ENCODE measurements at regions of chr12 and their contacts with region 1.

Region 1: GRCh38 chr12:110247333-110248104 is 33.5 kb upstream of the ATP2A2 start:
- DNase-seq: no peak
- ATAC-seq: peak; percentile 54

Region 2: DNA sequence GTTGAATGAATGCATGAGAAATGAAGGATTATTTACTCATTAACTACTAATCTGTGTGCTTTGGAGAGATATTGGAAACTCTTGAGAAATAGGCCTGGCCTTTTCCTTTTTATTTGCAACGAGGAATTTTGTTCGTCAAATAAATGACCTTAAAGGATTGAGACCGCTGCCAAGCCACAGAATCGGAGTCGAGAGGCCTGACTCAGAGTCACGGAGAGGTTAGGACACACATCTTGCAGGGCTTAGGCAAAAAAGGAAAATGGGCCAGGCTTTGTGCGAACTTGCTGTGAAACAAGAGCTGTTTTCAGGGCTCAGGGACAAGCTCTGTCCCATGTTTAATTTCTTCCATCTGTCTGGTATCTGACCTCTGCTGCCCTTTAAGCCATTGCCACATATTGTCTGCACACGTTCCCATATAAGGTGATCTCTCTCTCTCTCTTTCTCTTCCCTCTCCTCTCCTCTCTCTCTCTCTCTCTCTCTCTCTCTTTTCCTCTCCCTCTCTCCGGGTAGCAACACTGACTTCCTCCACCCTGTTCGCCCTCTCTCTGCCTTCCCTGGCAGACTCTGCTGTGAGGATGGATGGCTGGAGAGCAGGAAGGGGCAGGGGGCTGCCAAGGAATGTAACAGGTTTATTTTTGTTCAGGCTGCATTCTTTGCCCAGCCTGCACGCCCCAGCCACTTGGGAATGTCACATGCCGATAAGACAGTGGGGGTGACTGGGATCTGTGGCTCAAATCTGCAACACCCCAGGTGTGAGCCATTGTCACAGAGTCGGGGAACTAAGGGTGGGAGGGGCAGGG is 138.3 kb before region 1 on chr12:
- intact Hi-C with region 1: loop called (anchors 2 kb)
- DNase-seq: peak; percentile 77
- ATAC-seq: peak; percentile 91

Region 3: DNA sequence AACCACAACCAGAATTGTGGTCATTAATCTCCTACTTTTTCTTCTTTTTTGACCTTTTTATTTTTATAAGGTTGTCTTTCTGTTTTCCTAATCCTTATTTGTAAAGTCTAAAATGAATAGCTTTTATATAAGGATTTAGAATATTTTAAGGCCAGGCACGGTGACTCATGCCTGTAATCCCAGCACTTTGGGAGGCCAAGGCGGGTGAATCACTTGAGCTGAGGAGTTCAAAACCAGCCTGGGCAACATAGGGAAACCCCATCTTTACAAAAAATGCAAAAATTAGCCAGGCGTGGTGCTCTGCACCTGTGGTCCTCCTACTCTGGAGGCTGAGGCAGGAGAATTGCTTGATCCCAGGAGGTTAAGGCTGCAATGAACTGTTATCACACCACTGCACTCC is 68.2 kb before region 1 on chr12:
- intact Hi-C with region 1: no loop called
- DNase-seq: no peak
- ATAC-seq: no peak

Region 4: GRCh38 chr12:110198386-110198785 is 49.1 kb before region 1 on chr12:
- intact Hi-C with region 1: no loop called
- DNase-seq: no peak
- ATAC-seq: no peak

Region 5: DNA sequence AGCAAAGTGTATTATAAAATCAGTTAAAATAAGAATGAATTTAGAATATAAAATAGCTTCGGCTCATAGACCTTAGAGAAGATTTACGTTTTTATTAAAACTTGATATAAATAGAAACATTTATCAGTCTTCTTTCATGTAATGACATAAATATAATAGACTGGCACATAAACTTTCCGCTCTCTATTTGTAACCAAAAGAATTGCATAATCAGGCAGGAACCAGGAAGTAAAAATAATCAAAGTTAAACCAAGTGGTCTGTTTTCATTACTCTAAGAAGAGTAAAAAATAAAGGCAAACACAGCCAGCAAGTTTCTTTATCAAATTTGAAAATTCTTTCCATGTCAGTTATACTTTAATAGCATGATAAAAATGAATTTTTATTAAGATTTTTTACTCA is 12.8 kb before region 1 on chr12:
- intact Hi-C with region 1: loop called (anchors 2 kb)
- DNase-seq: no peak
- ATAC-seq: no peak

Measured in Right ventricle myocardium inferior (tissue), 1 donor.